ENCODE measurements at regions of chr1 and their contacts with region 1.

Region 1: GRCh38 chr1:26233903-26234643 is at the start of gene CEP85:
- DNase-seq: peak; percentile 99
- ATAC-seq: peak; percentile 95
- H3K4me3 Mint-ChIP-seq: peak within 1 kb of the TSS; percentile 96
- H3K27ac Mint-ChIP-seq: peak within 1 kb of the TSS; percentile 88
- H3K4me1 Mint-ChIP-seq: peaks cover 36% of the 10 kb centered on the region
- H3K27me3 Mint-ChIP-seq: no peaks in the 10 kb centered on the region
- total RNA-seq, gene CEP85: 42.0 to 56.3 TPM

Region 2: DNA sequence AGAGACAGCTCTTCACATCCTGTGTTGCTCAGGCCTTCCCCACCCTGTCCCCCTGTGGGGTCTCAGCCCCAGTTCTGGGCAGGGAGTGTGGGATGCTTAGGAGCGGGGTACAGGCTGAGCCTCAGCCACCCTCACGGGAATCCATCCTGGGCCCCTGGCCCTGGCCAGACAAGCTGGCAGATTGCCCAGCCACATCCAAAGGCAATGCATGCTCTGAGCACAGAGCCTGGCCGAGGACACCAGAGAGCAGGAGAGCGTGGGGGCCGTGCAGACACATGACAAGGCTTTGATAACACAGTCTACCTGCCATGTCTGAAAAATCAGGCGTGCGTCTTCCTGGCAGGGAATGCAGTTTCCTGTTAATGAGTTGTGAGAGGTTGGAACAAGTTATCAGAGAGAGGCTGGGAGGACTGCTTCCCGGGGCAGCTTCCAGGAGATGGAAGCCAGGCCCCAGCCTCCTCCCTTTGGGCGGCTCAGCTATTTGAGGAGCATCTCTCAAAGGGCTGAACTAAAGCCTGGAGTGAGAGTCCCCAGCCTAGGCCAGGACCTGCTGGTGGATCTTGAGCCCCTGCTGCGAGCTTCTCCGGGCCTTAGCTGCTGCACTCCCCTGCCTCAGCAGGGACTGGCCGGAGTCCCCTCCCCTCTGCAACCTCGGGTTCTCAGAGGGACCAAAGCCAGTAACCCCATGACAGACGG is 506.3 kb before region 1 on chr1:
- CTCF ChIA-PET with region 1: no interaction called
- DNase-seq: no peak
- ATAC-seq: no peak
- H3K4me3 Mint-ChIP-seq: no peak overlapping the region
- H3K27ac Mint-ChIP-seq: no peak overlapping the region
- H3K4me1 Mint-ChIP-seq: peaks cover 20% of the 10 kb centered on the region
- H3K27me3 Mint-ChIP-seq: peaks cover 91% of the 10 kb centered on the region

Region 3: DNA sequence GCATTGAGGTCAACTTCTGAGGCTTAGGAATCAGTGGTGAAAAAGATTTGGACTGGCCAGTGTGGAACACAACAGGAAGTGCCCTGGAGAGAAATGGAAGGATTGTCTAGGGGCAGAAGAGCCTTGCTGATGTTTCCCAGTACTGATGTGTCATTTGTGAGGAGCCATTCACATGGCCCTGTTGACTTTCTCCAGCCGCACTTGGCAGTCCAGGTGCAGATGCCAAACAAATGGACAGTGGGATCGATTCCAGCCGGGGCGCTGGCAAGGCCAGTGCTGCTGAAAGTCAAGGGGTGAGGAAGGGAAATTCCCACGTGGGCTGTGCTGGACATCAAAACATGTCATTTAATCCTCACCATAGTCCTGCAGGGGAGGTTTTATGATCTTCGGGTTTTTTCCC is 161.8 kb before region 1 on chr1:
- CTCF ChIA-PET with region 1: no interaction called
- DNase-seq: no peak
- ATAC-seq: no peak
- H3K4me3 Mint-ChIP-seq: no peak overlapping the region
- H3K27ac Mint-ChIP-seq: no peak overlapping the region
- H3K4me1 Mint-ChIP-seq: peaks cover 4% of the 10 kb centered on the region
- H3K27me3 Mint-ChIP-seq: peaks cover 57% of the 10 kb centered on the region

Region 4: DNA sequence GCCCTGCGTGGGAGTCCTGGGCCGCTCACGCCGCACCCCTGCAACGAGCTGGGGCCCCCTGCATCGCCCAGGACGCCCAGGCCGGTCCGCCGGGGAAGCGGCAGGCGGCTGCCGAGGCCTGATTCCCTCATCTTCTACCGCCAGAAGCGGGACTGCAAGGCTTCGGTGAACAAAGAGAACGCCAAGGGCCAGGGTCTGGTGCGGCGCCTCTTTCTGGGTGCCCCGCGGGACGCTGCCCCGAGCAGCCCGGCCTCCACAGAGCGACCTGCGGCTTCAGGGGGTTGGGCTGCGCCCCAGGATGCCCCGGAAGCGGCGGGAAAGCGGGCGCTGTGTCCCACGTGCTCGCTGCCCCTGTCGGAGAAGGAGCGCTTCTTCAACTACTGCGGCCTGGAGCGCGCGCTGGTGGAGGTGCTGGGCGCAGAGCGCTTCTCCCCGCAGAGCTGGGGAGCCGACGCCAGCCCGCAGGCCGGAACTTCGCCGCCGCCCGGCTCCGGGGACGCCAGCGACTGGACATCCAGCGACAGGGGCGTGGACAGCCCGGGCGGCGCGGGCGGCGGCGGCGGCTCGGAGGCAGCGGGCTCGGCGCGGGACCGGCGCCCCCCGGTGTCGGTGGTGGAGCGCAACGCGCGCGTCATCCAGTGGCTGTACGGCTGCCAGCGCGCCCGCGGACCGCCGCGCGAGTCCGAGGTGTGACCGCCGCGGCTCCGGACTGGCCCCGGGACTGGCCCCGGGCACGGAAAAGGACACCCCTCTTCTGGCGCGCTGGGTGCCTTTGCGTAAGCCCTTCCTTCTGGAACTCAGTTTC is 72.5 kb before region 1 on chr1:
- CTCF ChIA-PET with region 1: interaction called, 16 read pairs
- DNase-seq: peak; percentile 52
- ATAC-seq: peak; percentile 64
- H3K4me3 Mint-ChIP-seq: peak overlapping the region; percentile 48
- H3K27ac Mint-ChIP-seq: no peak overlapping the region
- H3K4me1 Mint-ChIP-seq: peaks cover 20% of the 10 kb centered on the region
- H3K27me3 Mint-ChIP-seq: peaks cover 67% of the 10 kb centered on the region

Region 5: GRCh38 chr1:26210147-26210870 is 23.8 kb before region 1 on chr1:
- CTCF ChIA-PET with region 1: interaction called, 13 read pairs
- DNase-seq: no peak
- ATAC-seq: no peak
- H3K4me3 Mint-ChIP-seq: no peak overlapping the region
- H3K27ac Mint-ChIP-seq: no peak overlapping the region
- H3K4me1 Mint-ChIP-seq: no peaks in the 10 kb centered on the region
- H3K27me3 Mint-ChIP-seq: peaks cover 2% of the 10 kb centered on the region

Region 6: DNA sequence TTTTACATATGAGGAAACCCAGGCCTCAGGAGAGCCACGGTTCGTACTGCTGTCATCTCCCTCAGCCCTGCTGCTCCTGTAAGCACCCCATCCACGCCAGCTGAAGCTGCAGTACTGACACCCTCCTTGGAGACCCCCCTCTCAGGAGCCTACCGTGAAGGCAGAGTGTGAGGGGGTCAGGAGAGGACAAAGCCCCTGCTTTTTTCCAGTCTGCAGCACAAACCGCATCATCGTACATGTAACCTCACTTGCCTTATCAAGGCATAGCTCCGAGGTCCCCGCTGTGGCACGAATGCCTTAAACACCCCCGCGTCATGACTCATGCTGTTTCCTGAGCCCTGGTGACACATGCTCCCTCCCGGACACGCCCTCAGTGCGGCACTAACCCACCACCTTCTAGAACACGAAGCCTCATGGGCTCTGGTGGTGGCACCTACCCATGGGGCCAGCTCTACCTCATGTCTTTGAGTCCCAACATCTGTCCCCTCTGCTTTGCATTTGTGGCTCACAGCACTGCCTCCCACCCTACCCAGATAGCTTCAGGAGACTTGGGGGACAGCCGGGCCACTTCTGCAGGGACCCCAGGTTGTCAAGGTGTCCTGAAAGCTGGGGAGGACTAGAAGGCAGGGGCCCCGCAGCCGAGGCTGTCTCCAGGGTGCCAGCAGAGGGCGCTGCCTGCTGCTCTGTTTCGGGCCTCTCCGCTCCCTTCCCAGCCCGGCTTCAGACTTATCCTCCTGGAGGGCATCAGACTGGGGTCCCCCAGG is 50.7 kb after region 1 on chr1:
- CTCF ChIA-PET with region 1: interaction called, 35 read pairs
- DNase-seq: peak; percentile 99
- ATAC-seq: peak; percentile 71
- H3K4me3 Mint-ChIP-seq: peak overlapping the region; percentile 69
- H3K27ac Mint-ChIP-seq: peak overlapping the region; percentile 99
- H3K4me1 Mint-ChIP-seq: peaks cover 89% of the 10 kb centered on the region
- H3K27me3 Mint-ChIP-seq: no peaks in the 10 kb centered on the region

Region 7: DNA sequence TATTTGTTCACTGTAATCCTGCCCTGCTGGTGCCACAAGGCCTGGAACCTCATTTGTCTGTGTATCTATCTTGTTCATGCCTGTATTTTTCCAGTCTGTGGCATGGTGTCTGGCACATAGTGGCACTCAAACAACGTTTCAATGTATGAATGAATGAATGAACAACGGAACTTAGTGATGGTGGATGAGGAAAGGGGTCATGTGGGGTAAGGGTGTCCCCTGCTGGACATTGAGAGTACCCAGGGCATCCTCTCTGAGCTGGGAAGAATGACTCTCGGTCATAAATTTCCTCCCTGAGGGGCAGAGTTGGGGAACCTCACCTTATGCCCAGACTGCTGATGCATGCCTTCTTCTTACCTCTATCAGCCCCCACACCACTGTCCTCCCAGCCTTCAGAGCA is 157.4 kb after region 1 on chr1:
- CTCF ChIA-PET with region 1: interaction called, 14 read pairs
- DNase-seq: peak; percentile 78
- ATAC-seq: peak; percentile 80
- H3K4me3 Mint-ChIP-seq: no peak overlapping the region
- H3K27ac Mint-ChIP-seq: peak overlapping the region; percentile 62
- H3K4me1 Mint-ChIP-seq: peaks cover 55% of the 10 kb centered on the region
- H3K27me3 Mint-ChIP-seq: peaks cover 4% of the 10 kb centered on the region

Region 8: GRCh38 chr1:26472901-26473845 is 239.1 kb after region 1 on chr1:
- CTCF ChIA-PET with region 1: interaction called, 11 read pairs
- DNase-seq: peak; percentile 97
- ATAC-seq: peak; percentile 74
- H3K4me3 Mint-ChIP-seq: peak overlapping the region; percentile 86
- H3K27ac Mint-ChIP-seq: peak overlapping the region; percentile 61
- H3K4me1 Mint-ChIP-seq: peaks cover 45% of the 10 kb centered on the region
- H3K27me3 Mint-ChIP-seq: no peaks in the 10 kb centered on the region

Measured in activated CD8-positive, alpha-beta memory T cell treated with anti-CD3 and anti-CD28 coated beads, Interleukin-2, amount 10 ng/mL, durations not matched to agents 7 days and 5 days (primary cell).